ENCODE measurements at regions of chr3 and their contacts with region 1.

Region 1: DNA sequence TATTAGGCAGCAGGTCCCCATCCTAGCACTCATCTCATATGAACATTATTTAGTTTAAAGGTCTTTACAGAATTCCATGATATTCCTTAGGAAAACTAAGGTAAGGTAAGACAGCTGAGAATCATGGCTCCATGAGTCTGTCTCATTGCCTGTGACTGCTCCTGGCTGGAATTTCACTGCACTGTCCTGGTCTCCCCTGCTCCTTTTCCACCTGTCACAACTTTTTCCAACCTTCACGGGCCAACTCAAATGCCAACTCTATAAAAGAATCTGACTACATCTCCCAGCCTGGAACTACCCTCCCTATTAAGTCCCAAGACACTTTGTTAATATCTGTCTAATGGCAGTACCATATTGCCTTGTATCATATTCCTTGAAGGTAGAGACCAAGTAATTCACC is 7.6 kb downstream of the CNBP start:
- DNase-seq: no peak
- H3K4me3 Mint-ChIP-seq: peak overlapping the region; percentile 6
- H3K27ac Mint-ChIP-seq: peak overlapping the region; percentile 79
- H3K4me1 Mint-ChIP-seq: peaks cover 80% of the 10 kb centered on the region
- H3K27me3 Mint-ChIP-seq: no peaks in the 10 kb centered on the region

Region 2: DNA sequence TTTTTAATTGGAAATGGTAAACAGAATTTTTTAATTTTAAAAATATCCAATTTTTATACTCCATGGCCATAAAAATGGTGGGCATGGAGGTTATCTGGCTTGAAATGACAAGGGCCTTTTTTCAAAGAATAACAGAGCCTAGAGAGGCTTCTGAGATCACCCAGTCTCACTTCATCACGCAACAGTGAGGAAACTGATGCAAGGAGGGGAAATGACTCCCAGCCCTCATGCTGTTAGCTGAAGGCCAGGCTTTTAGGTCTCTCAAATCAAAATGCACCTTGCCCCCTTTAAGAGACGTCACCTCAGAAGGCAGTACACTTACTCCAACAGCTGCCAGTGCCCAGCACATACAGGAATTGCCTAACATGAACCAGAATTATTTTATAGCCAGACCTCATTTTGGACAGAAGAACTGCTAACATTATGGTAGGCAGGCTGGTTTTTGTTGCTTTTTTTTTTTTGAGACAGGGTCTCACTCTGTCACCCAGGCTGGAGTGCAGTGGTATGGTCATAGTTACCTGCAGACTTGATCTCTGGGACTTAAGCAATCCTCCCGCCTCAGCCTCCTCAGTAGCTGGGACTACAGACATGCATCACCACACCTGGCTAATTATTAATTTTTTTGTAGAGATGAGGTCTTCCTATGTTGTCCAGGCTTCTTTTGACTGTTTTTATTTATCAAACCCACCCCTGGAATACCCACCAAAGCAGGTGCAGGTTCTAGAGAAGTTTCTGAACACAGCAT is 63.6 kb before region 1 on chr3:
- CTCF ChIA-PET with region 1: no interaction called
- POLR2A ChIA-PET with region 1: no interaction called
- intact Hi-C with region 1: no loop called
- DNase-seq: peak; percentile 74
- H3K4me3 Mint-ChIP-seq: peak overlapping the region; percentile 52
- H3K27ac Mint-ChIP-seq: peak overlapping the region; percentile 92
- H3K4me1 Mint-ChIP-seq: peaks cover 66% of the 10 kb centered on the region
- H3K27me3 Mint-ChIP-seq: no peaks in the 10 kb centered on the region

Region 3: DNA sequence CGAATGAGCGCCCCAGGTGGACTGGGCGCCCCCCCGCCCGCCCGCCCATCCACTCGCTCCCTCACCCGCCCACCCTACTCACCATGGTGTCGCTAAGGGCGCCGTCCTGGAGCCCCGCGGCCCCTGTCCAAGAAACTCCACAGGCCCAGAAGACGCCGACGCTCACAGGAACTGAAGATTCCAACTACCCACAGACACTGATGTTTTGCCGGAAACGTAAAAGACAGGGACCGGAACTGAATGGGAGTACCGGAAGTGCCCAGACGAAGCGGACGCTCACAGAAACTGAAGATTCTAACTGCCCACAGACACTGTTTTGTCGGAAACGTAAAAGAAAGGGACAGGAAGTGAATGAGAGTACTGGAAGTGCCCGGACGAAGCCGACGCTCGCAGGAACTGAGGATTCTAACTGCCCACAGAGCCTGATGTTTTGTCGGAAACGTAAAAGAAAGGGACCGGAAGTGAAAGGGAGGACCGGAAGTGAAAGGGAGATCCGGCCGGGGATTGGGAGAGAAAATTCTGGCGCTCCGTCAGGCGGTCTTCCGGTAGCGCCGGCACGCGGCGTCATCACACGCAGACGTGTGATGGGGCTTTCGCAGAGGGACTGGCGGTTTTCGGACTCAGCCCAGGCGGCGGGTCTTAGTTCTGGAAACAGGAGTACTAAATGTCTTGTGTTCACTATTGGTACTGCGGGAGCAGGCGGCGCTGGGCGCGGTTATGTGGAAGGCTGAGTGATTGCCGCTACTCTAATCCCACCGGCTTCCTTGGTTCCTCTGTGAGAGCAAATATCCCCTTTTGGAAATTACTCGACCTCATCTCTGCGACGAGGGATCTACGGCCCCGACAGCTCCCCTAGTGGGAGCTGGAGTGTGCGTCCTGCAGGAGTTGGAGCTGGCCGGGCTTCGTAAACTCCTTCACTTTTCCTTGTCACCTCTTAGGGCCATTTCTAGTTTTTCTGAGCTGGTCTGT is 14.9 kb before region 1 on chr3 and contains the start of gene ISY1:
- CTCF ChIA-PET with region 1: interaction called, 30 read pairs
- POLR2A ChIA-PET with region 1: interaction called, 25 read pairs
- intact Hi-C with region 1: loop called (anchors 2 kb)
- DNase-seq: peak; percentile 93
- H3K4me3 Mint-ChIP-seq: peak within 1 kb of the TSS; percentile 98
- H3K27ac Mint-ChIP-seq: peak within 1 kb of the TSS; percentile 100
- H3K4me1 Mint-ChIP-seq: peaks cover 31% of the 10 kb centered on the region
- H3K27me3 Mint-ChIP-seq: no peaks in the 10 kb centered on the region
- total RNA-seq, gene ISY1: 60.7 to 61.7 TPM

Measured in activated CD4-positive, alpha-beta memory T cell treated with anti-CD3 and anti-CD28 coated beads for 36 hours (primary cell).